Ovary (tissue), 10 donors: ENCODE measurements at regions of chr3 and their contacts with region 1.

Region 1: GRCh38 chr3:19946832-19947548 is at the start of gene RAB5A:
- DNase-seq: peak; percentile 97 to 98 (median 97)
- H3K4me3 ChIP-seq: peak within 1 kb of the TSS; percentile 94
- H3K27ac ChIP-seq: peak within 1 kb of the TSS; percentile 92 to 96
- H3K4me1 ChIP-seq: peaks cover 4% of the 10 kb centered on the region
- H3K27me3 ChIP-seq: no peaks in the 10 kb centered on the region
- CTCF ChIP-seq: peak in 2 of 3 donors; percentile 2 to 18
- EP300 ChIP-seq: peak; percentile 93
- POLR2A ChIP-seq: peak; percentile 93
- total RNA-seq, gene RAB5A: 39.8 to 61.2 (median 46.9) TPM

Region 2: DNA sequence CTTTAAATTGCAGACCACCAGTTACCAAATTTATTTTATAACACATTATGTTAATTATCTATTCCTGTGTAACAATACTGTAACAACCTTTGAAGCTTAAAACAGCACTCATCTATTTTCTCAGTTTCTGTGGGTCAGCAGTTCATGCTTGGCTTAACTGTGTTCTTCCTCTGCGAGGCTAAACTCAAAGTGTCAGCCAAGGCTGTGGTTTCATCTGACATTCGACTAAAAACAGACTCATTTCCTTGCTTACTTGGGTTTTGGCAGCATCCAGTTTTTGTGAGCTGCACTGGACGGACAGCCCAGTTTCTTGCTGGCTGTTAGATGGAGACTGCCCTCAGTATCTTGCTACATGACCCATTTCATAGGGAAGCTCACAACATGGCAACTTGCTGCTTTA is 1046.0 kb before region 1 on chr3:
- intact Hi-C with region 1: no loop called
- DNase-seq: peak in 1 of 5 donors; percentile 7
- H3K4me3 ChIP-seq: no peak overlapping the region
- H3K27ac ChIP-seq: no peak overlapping the region
- H3K4me1 ChIP-seq: no peaks in the 10 kb centered on the region
- H3K27me3 ChIP-seq: no peaks in the 10 kb centered on the region
- CTCF ChIP-seq: no peak
- EP300 ChIP-seq: no peak
- POLR2A ChIP-seq: no peak

Region 3: DNA sequence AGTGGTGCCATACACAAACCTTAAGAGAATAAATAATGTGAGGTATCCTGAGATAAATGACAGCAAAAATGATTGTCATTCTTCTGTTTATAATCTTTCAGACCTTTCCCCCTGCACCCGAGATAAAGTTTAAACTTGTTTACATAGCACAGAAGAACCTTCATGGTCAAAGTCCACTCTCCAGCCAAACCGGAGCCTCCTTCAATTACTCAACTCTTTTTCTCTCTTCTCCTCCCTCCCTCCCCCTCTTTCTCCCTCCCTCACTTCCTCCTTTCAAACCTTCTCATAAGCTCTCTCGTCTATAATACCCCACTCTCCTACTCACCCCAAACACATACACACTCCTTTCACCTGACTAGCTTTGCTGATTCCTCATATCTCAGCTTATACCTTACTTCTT is 211.9 kb before region 1 on chr3:
- intact Hi-C with region 1: no loop called
- DNase-seq: no peak
- H3K4me3 ChIP-seq: no peak overlapping the region
- H3K27ac ChIP-seq: no peak overlapping the region
- H3K4me1 ChIP-seq: no peaks in the 10 kb centered on the region
- H3K27me3 ChIP-seq: no peaks in the 10 kb centered on the region
- CTCF ChIP-seq: no peak
- EP300 ChIP-seq: no peak
- POLR2A ChIP-seq: no peak

Region 4: GRCh38 chr3:19798324-19798723 is 148.7 kb before region 1 on chr3:
- intact Hi-C with region 1: no loop called
- DNase-seq: no peak
- H3K4me3 ChIP-seq: no peak overlapping the region
- H3K27ac ChIP-seq: no peak overlapping the region
- H3K4me1 ChIP-seq: no peaks in the 10 kb centered on the region
- H3K27me3 ChIP-seq: no peaks in the 10 kb centered on the region
- CTCF ChIP-seq: no peak
- EP300 ChIP-seq: no peak
- POLR2A ChIP-seq: no peak

Region 5: DNA sequence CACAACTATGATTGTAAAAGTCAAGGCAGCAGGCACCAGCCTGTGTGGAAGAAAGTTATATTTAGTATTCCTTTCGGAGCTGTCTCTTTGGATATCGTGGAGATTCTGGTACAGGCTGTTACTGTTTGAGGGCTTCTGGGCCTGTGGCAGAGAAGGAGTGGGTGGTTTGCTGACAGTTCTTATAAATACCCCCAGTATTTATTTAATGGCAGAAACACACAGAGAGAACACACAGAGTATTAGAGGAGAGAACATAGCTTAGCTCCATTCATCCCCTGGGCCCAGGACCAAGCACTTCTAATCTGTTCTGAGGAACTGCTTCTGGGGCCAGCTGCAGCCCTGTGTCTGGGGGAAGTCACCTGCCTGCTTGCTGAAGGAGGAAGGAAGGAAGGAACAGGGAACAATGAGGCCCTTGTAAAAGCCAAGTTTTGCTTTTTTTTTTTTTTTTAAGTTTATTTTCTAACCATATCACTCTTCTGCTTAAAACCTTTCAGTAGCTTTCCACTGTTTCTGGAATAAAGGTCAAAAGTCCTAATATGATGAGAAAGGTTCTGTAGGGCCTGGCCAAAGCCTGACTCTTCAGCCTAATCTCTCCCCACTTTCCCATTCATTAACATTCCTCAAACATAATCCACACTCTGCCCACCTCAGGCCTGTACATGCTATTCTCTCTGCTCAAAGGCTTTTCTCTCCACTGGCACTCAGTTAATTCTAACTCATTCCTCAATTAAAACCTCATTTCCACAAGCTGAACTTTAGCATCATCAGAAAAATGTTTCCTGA is 76.8 kb after region 1 on chr3:
- intact Hi-C with region 1: no loop called
- DNase-seq: peak in 2 of 5 donors; percentile 21 to 50
- H3K4me3 ChIP-seq: no peak overlapping the region
- H3K27ac ChIP-seq: peak overlapping the region in 1 of 2 donors; percentile 6
- H3K4me1 ChIP-seq: peaks cover 2% of the 10 kb centered on the region
- H3K27me3 ChIP-seq: no peaks in the 10 kb centered on the region
- CTCF ChIP-seq: no peak
- EP300 ChIP-seq: no peak
- POLR2A ChIP-seq: no peak

Region 6: GRCh38 chr3:20185701-20186598 is 239.0 kb after region 1 on chr3 and contains the start of gene SGO1:
- intact Hi-C with region 1: loop called in 1 of 4 experiments (anchors 10 kb)
- DNase-seq: peak; percentile 99 to 100 (median 99)
- H3K4me3 ChIP-seq: peak within 1 kb of the TSS; percentile 76
- H3K27ac ChIP-seq: peak within 1 kb of the TSS; percentile 84 to 86
- H3K4me1 ChIP-seq: peaks cover 5% of the 10 kb centered on the region
- H3K27me3 ChIP-seq: no peaks in the 10 kb centered on the region
- CTCF ChIP-seq: no peak
- EP300 ChIP-seq: peak; percentile 13
- POLR2A ChIP-seq: peak; percentile 87
- total RNA-seq, gene SGO1: 0.10 to 1.2 (median 0.33) TPM